Psoas muscle (tissue), 8 donors: ENCODE measurements at regions of chr11 and their contacts with region 1.

Region 1: GRCh38 chr11:65418711-65419459 is 3.7 kb upstream of the NEAT1 start:
- DNase-seq: peak; percentile 99
- ATAC-seq: peak; percentile 20 to 38 (median 34)
- H3K4me3 ChIP-seq: peak overlapping the region; percentile 86
- H3K27ac ChIP-seq: peak overlapping the region; percentile 100
- H3K4me1 ChIP-seq: peaks cover 57% of the 10 kb centered on the region
- H3K27me3 ChIP-seq: no peaks in the 10 kb centered on the region
- CTCF ChIP-seq: no peak

Region 2: DNA sequence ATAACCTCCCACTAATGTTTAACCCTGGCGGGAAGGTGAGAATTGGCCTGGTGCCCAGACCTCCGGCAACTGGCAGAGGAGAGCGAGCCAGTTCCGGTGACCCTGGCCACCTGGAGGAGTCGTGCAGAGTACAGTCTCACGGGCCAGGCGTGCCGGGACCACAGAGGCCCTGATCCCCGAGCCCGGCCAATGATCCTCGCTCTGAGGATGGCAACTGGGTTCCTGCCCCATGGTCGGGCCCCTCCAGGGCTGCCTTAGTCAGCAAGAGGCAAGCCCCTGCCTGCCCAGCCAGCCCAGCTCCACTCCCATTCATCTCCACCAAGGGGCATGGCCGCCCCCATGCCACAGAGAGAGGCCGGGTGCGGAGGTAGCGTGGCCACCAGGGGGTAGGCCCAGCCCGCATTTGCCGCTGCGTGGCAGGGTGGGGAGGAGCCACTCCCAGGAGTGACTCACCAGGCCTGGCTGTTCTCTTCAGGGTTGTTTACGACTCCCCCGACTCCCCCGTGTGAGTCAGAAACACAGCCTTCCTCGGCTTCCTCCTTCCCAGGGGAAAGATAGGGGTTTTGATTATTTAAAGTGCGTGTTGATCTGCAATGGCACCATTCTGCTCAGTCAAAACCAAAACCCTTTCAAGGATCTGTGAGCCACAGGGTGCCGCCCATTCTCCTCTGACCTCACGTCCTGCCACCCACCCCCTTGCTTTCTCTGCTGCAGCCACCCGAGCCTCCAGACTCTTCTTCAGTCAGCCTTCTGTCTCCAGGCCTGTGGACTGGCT is 36.7 kb before region 1 on chr11 and contains the start of gene SLC25A45:
- intact Hi-C with region 1: loop called (anchors 2 kb)
- DNase-seq: peak; percentile 94 to 97
- ATAC-seq: peak; percentile 87 to 90 (median 88)
- H3K4me3 ChIP-seq: peak within 1 kb of the TSS; percentile 53
- H3K27ac ChIP-seq: peak within 1 kb of the TSS; percentile 89
- H3K4me1 ChIP-seq: peaks cover 43% of the 10 kb centered on the region
- H3K27me3 ChIP-seq: no peaks in the 10 kb centered on the region
- CTCF ChIP-seq: peak; percentile 80
- total RNA-seq, gene SLC25A45: 5.7 to 8.8 (median 7.2) TPM

Region 3: DNA sequence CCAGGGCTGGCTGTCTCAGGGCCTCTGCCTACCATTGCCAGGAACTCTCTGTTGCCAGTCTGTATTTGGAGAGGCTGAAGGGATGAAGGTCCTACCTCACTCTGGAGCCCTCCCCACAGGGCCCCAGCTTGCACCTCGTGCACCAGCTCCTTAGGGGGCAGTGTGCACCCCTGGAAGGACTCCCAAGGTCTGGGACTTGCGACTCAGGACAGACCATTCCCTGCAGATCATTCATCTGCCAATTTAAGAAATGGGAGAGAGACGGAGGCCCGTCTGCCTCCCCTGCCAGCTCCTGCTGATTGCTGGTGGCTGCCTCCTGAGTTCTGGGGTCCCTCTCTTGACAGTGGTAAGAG is 52.5 kb after region 1 on chr11:
- intact Hi-C with region 1: loop called (anchors 2 to 5 kb)
- DNase-seq: peak; percentile 85 to 94
- ATAC-seq: peak; percentile 81 to 84 (median 82)
- H3K4me3 ChIP-seq: peak overlapping the region; percentile 61
- H3K27ac ChIP-seq: peak overlapping the region; percentile 99
- H3K4me1 ChIP-seq: peaks cover 54% of the 10 kb centered on the region
- H3K27me3 ChIP-seq: no peaks in the 10 kb centered on the region
- CTCF ChIP-seq: peak; percentile 63

Region 4: DNA sequence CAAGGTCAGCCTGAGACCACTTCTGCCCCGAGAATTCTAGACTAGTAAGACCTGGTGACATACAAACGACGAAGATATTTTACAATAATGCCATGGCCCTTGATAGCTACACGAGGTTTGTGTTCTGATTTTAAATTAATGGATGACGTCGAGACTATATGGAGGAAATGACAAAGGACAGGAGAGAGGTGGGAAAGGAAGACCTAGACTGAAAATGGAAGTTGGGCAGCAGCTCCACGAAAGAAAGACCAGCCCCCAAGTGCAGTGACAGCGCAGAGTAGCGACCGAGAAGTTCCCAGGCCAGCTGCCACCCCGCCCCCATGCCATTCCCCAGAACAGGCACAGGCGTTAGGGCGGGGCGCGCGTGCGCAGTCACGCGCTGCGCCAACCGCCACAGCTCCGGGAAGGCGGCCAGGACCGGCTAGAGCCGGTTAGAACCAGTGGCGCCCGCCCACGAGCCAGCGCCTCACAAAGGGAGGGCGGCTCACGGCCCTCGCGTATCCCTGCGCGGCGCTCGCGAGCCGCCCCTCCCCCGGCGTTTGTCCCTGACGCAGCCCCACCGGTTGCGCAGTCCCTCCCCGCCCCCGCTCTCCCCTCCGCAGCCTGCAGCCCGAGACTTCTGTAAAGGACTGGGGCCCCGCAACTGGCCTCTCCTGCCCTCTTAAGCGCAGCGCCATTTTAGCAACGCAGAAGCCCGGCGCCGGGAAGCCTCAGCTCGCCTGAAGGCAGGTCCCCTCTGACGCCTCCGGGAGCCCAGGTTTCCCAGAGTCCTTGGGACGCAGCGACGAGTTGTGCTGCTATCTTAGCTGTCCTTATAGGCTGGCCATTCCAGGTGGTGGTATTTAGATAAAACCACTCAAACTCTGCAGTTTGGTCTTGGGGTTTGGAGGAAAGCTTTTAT is 78.5 kb after region 1 on chr11:
- intact Hi-C with region 1: loop called (anchors 1 to 2 kb)
- DNase-seq: peak; percentile 99
- ATAC-seq: peak; percentile 75 to 81 (median 76)
- H3K4me3 ChIP-seq: peak overlapping the region; percentile 92
- H3K27ac ChIP-seq: peak overlapping the region; percentile 99
- H3K4me1 ChIP-seq: peaks cover 43% of the 10 kb centered on the region
- H3K27me3 ChIP-seq: no peaks in the 10 kb centered on the region
- CTCF ChIP-seq: no peak

Region 5: DNA sequence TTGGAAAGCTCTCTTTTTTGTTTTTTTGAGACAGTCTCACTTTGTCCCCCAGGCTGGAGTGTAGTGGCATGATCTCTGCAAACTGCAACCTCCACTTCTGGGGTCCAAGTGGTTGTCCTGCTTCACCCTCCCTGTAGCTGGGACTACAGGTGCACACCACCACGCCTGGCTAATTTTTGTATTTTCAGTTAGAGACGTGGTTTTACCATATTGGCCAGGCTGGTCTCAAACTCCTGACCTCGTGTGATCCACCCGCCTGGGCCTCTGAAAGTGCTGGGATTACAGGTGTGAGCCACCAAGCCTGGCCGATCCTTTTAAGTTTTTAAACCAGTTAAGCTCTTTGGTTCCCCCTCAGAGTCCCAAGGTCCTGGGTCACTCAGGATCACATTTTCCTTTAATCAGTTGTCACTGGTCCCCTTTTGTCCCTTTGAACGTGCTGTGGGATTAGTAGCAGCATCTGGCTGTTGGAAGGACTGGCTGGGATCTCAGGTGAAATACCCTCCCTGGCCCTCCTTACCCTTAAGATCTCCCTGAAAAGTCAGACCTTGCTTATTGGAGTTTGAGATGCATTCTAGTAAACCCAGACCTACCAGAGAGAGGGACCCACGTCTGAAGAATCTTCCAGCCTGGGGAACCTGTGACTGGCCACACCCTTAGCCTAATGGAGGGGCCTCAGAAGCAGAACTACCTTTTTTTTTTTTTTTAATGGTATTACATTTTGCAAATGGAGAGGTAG is 88.1 kb after region 1 on chr11:
- intact Hi-C with region 1: loop called in 1 of 2 experiments (anchors 2 kb)
- DNase-seq: peak; percentile 59 to 74
- ATAC-seq: peak; percentile 27 to 37 (median 32)
- H3K4me3 ChIP-seq: peak overlapping the region; percentile 92
- H3K27ac ChIP-seq: peak overlapping the region; percentile 99
- H3K4me1 ChIP-seq: peaks cover 30% of the 10 kb centered on the region
- H3K27me3 ChIP-seq: no peaks in the 10 kb centered on the region
- CTCF ChIP-seq: no peak

Region 6: GRCh38 chr11:65546217-65546958 is 127.5 kb after region 1 on chr11:
- intact Hi-C with region 1: no loop called
- DNase-seq: peak; percentile 79 to 86
- ATAC-seq: peak; percentile 39 to 79 (median 67)
- H3K4me3 ChIP-seq: no peak overlapping the region
- H3K27ac ChIP-seq: no peak overlapping the region
- H3K4me1 ChIP-seq: peaks cover 6% of the 10 kb centered on the region
- H3K27me3 ChIP-seq: no peaks in the 10 kb centered on the region
- CTCF ChIP-seq: no peak

Region 7: GRCh38 chr11:65606876-65607613 is 188.2 kb after region 1 on chr11:
- intact Hi-C with region 1: no loop called
- DNase-seq: peak; percentile 96 to 97
- ATAC-seq: peak; percentile 98
- H3K4me3 ChIP-seq: peak overlapping the region; percentile 61
- H3K27ac ChIP-seq: peak overlapping the region; percentile 83
- H3K4me1 ChIP-seq: peaks cover 28% of the 10 kb centered on the region
- H3K27me3 ChIP-seq: no peaks in the 10 kb centered on the region
- CTCF ChIP-seq: no peak